Mammary epithelial cell (primary cell): ENCODE measurements at regions of chr12 and their contacts with region 1.

Region 1: GRCh38 chr12:75526655-75527511 is 15.5 kb upstream of the KRR1 start:
- DNase-seq: peak; percentile 34
- H3K4me3 ChIP-seq: no peak overlapping the region
- H3K27ac ChIP-seq: no peak overlapping the region
- H3K4me1 ChIP-seq: no peaks in the 10 kb centered on the region
- H3K27me3 ChIP-seq: no peaks in the 10 kb centered on the region
- CTCF ChIP-seq: peak; percentile 47 to 69

Region 2: DNA sequence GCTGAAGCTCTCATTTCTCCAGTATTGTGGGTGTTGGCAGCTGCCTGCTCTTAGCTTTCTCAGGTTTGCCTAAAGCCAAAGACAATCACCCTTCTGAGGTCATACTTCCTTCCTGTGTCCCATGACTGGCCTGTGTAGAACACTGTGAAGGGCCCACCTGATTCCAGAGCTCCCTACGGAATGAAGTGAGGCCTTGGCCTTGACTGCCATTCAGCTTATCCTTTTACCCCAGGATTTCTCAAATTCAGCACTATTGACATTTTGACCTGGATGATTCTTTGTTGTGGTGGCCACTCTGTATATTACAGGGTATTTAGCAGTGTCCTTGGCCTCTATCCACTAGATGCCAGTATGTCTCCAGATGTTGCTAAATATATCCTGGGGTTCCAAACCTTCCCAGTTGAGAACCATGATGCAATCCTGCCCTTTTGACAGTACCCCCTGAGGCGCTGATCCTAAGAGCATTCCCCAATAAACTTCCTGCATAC is 96.8 kb after region 1 on chr12:
- CTCF ChIA-PET with region 1: no interaction called
- dilution Hi-C with region 1: no loop called
- in situ Hi-C with region 1: no loop called
- intact Hi-C with region 1: loop called (anchors 1 kb)
- DNase-seq: peak; percentile 53
- H3K4me3 ChIP-seq: no peak overlapping the region
- H3K27ac ChIP-seq: peak overlapping the region; percentile 18
- H3K4me1 ChIP-seq: peaks cover 9% of the 10 kb centered on the region
- H3K27me3 ChIP-seq: no peaks in the 10 kb centered on the region
- CTCF ChIP-seq: peak; percentile 30 to 60

Region 3: DNA sequence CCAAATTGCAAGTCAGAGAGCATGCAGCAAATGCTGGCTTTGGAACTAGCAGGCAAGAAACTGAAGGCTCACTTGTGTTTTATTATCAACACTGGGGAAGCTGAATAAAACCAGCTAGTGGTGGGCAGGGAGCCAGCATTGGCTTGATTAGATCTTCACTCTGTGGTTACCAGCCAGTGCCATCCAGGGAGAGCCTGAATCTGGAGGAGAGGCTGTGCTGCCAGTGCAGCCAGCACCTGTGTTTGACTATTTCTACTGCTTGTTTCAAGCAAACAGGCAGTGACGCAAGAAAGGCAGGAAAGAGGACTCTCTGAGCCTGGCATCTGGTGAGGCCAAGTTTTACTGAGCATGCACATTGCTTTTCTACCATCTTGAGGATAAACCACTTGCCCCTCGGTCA is 257.7 kb after region 1 on chr12:
- CTCF ChIA-PET with region 1: no interaction called
- dilution Hi-C with region 1: no loop called
- in situ Hi-C with region 1: no loop called
- intact Hi-C with region 1: loop called (anchors 10 kb)
- DNase-seq: peak; percentile 91
- H3K4me3 ChIP-seq: no peak overlapping the region
- H3K27ac ChIP-seq: peak overlapping the region; percentile 2
- H3K4me1 ChIP-seq: peaks cover 56% of the 10 kb centered on the region
- H3K27me3 ChIP-seq: no peaks in the 10 kb centered on the region
- CTCF ChIP-seq: no peak

Region 4: GRCh38 chr12:75814851-75815754 is 288.2 kb after region 1 on chr12:
- CTCF ChIA-PET with region 1: no interaction called
- dilution Hi-C with region 1: no loop called
- in situ Hi-C with region 1: loop called in 1 of 2 experiments (anchors 25 kb)
- intact Hi-C with region 1: loop called (anchors 10 kb)
- DNase-seq: peak; percentile 66
- H3K4me3 ChIP-seq: no peak overlapping the region
- H3K27ac ChIP-seq: peak overlapping the region; percentile 60
- H3K4me1 ChIP-seq: peaks cover 23% of the 10 kb centered on the region
- H3K27me3 ChIP-seq: no peaks in the 10 kb centered on the region
- CTCF ChIP-seq: no peak

Region 5: GRCh38 chr12:75954041-75954440 is 427.2 kb after region 1 on chr12:
- CTCF ChIA-PET with region 1: no interaction called
- dilution Hi-C with region 1: no loop called
- in situ Hi-C with region 1: no loop called
- intact Hi-C with region 1: loop called (anchors 5 kb)
- DNase-seq: peak; percentile 95
- H3K4me3 ChIP-seq: no peak overlapping the region
- H3K27ac ChIP-seq: peak overlapping the region; percentile 94
- H3K4me1 ChIP-seq: peaks cover 22% of the 10 kb centered on the region
- H3K27me3 ChIP-seq: no peaks in the 10 kb centered on the region
- CTCF ChIP-seq: no peak

Region 6: GRCh38 chr12:76037130-76038103 is 510.5 kb after region 1 on chr12:
- CTCF ChIA-PET with region 1: interaction called, 5 read pairs
- dilution Hi-C with region 1: no loop called
- in situ Hi-C with region 1: loop called (anchors 5 to 10 kb)
- intact Hi-C with region 1: no loop called
- DNase-seq: peak; percentile 70
- H3K4me3 ChIP-seq: no peak overlapping the region
- H3K27ac ChIP-seq: no peak overlapping the region
- H3K4me1 ChIP-seq: peaks cover 5% of the 10 kb centered on the region
- H3K27me3 ChIP-seq: no peaks in the 10 kb centered on the region
- CTCF ChIP-seq: peak; percentile 73 to 83

Region 7: GRCh38 chr12:76277480-76277879 is 750.6 kb after region 1 on chr12:
- CTCF ChIA-PET with region 1: interaction called, 10 read pairs
- dilution Hi-C with region 1: no loop called
- in situ Hi-C with region 1: no loop called
- intact Hi-C with region 1: no loop called
- DNase-seq: peak; percentile 61
- H3K4me3 ChIP-seq: no peak overlapping the region
- H3K27ac ChIP-seq: no peak overlapping the region
- H3K4me1 ChIP-seq: peaks cover 37% of the 10 kb centered on the region
- H3K27me3 ChIP-seq: no peaks in the 10 kb centered on the region
- CTCF ChIP-seq: no peak